ENCODE measurements at regions of chr7 and their contacts with region 1.

Region 1: GRCh38 chr7:30422922-30423321 is 55.7 kb downstream of the NOD1 start:
- DNase-seq: no peak
- ATAC-seq: peak; percentile 82
- H3K4me3 ChIP-seq: no peak overlapping the region
- H3K27ac ChIP-seq: no peak overlapping the region
- H3K4me1 ChIP-seq: peaks cover 3 to 21% of the 10 kb centered on the region in 2 donors
- H3K27me3 ChIP-seq: no peaks in the 10 kb centered on the region
- CTCF ChIP-seq: no peak

Region 2: DNA sequence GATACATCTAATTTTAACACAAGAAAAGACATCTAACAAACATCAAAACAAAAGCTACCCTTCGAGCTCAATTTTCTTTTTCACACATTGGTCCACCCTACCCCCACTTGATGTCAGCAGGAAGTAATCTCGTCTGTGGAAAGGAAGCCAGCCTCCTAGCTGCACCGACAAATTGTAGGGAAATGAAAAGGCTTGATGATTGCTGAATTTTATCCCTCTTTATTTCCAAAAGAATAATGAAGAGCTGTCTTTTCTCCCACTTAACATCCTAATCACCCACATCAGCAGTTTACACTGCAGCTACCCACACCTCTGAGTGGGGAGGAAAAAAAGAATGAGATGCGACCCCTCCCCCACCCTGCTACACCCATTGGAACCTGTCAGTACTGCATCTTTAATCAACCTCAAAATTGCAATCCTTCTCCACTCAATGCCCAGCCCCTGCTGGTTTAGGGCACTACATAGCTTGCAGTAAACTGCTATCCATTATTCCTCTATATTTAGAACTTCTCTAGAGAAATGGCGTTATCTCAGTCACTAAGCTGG is 1265.9 kb before region 1 on chr7:
- intact Hi-C with region 1: no loop called
- DNase-seq: no peak
- ATAC-seq: no peak
- H3K4me3 ChIP-seq: no peak overlapping the region
- H3K27ac ChIP-seq: no peak overlapping the region
- H3K4me1 ChIP-seq: no peaks in the 10 kb centered on the region
- H3K27me3 ChIP-seq: no peaks in the 10 kb centered on the region
- CTCF ChIP-seq: no peak

Region 3: GRCh38 chr7:30173058-30173897 is 249.6 kb before region 1 on chr7:
- intact Hi-C with region 1: loop called in 1 of 2 experiments (anchors 10 kb)
- DNase-seq: peak in 3 of 4 donors; percentile 58 to 96 (median 92)
- ATAC-seq: peak; percentile 65
- H3K4me3 ChIP-seq: no peak overlapping the region
- H3K27ac ChIP-seq: peak overlapping the region in 1 of 2 donors; percentile 43
- H3K4me1 ChIP-seq: peaks cover 3 to 82% of the 10 kb centered on the region in 2 donors
- H3K27me3 ChIP-seq: no peaks in the 10 kb centered on the region
- CTCF ChIP-seq: no peak

Region 4: GRCh38 chr7:30193336-30193943 is 229.5 kb before region 1 on chr7:
- intact Hi-C with region 1: no loop called
- DNase-seq: no peak
- ATAC-seq: no peak
- H3K4me3 ChIP-seq: no peak overlapping the region
- H3K27ac ChIP-seq: no peak overlapping the region
- H3K4me1 ChIP-seq: no peaks in the 10 kb centered on the region
- H3K27me3 ChIP-seq: no peaks in the 10 kb centered on the region
- CTCF ChIP-seq: no peak

Region 5: DNA sequence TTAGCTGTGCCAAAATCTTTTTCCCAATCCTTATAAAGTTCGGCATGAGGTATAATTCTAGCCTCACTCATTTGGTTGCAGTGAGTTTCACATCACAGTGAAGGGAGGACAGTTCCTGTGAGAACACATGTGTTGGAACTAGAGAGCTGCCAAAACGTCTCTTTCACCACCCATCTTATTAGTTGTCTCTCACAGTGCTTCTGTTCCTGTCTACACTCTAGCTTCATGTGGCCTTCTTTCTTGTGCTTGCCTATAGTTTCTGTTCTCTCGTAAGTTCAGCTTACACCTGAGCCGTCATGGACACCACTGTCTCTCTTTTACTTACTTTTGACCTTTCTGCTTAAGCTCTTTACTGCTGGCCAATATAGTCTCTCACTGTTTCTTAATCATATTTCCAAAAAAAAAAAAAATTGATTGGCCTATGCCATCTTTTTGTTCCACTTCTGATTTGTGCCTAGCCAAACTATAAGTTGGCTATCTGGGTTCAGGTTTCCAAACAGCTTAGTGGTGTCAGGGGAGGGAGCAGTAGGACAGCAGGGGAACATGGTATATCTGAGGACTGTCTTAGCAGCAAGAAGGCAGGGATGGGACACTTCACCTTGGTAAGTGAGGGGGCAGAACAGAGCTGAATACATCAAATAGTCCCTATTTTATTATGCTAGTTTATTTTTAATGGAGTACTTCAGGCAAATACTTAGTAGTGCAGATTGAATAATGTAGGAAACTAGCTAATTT is 100.5 kb before region 1 on chr7:
- intact Hi-C with region 1: no loop called
- DNase-seq: no peak
- ATAC-seq: peak; percentile 76
- H3K4me3 ChIP-seq: no peak overlapping the region
- H3K27ac ChIP-seq: peak overlapping the region; percentile 65 to 72
- H3K4me1 ChIP-seq: peaks cover 7 to 41% of the 10 kb centered on the region in 2 donors
- H3K27me3 ChIP-seq: no peaks in the 10 kb centered on the region
- CTCF ChIP-seq: no peak

Region 6: DNA sequence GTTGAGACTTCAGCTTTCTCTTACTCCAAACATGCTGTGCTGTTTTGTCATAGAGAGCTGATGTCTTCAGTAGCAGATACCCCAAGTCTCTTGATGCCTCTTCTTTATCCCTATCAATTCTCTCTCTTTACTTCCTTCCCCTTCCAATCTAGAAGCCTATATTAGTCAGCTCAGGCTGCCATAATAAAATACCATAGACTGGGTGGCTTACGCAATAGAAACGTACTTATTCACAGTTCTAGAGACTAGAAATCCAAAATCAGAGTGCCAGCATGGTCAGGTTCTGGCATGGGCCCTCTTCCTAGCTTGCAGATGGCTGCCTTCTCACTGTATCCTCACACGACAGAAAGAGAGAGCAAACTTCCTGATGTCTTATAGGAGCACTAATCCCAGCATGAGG is 162.8 kb after region 1 on chr7:
- intact Hi-C with region 1: no loop called
- DNase-seq: no peak
- ATAC-seq: no peak
- H3K4me3 ChIP-seq: no peak overlapping the region
- H3K27ac ChIP-seq: no peak overlapping the region
- H3K4me1 ChIP-seq: no peaks in the 10 kb centered on the region
- H3K27me3 ChIP-seq: no peaks in the 10 kb centered on the region
- CTCF ChIP-seq: no peak